ENCODE measurements at regions of chr2 and their contacts with region 1.

Region 1: DNA sequence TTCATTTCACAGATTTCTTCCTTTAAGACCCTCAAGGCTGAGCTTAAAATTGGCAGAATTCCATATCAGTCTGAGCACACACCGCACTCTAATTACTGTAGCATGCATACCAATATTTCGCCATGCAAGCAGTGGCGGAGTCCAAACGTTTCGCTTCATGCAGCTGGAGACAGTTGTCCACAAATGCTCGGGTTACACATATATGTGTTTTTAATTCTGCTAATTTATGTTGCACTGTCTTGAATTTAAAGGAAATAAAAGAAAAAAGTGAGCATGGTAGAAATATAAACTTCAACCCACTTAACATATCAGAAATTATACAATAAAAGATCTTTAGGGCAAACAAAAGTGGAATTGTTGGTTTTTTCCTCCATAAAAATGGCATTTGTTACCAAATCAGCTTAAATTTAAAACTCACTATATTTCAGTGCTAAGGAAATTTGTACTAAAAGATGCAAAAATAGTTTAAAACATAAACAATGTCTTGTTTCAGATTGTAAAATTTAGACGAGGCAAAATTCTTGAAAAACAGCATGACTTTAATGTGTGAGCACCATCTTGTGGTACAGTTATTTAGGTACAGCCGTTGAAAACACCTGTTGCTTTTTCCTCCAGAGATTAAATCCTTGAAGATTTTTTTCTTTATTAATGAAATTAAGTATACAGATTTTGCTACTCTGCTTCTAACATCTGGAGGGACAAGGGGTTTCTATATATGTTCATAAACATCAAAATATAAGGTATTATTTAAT is 24.1 kb upstream of the KANSL1L start:
- DNase-seq: peak in 3 of 14 experiments; percentile 50 to 71 (median 71)
- ATAC-seq: peak; percentile 43
- H3K4me3 ChIP-seq: no peak overlapping the region
- H3K4me3 Mint-ChIP-seq: peak overlapping the region; percentile 69
- H3K27ac ChIP-seq: no peak overlapping the region
- H3K27ac Mint-ChIP-seq: no peak overlapping the region
- H3K4me1 ChIP-seq: no peaks in the 10 kb centered on the region
- H3K4me1 Mint-ChIP-seq: no peaks in the 10 kb centered on the region
- H3K27me3 ChIP-seq: no peaks in the 10 kb centered on the region
- H3K27me3 Mint-ChIP-seq: no peaks in the 10 kb centered on the region
- CTCF ChIP-seq: peak; percentile 81

Region 2: DNA sequence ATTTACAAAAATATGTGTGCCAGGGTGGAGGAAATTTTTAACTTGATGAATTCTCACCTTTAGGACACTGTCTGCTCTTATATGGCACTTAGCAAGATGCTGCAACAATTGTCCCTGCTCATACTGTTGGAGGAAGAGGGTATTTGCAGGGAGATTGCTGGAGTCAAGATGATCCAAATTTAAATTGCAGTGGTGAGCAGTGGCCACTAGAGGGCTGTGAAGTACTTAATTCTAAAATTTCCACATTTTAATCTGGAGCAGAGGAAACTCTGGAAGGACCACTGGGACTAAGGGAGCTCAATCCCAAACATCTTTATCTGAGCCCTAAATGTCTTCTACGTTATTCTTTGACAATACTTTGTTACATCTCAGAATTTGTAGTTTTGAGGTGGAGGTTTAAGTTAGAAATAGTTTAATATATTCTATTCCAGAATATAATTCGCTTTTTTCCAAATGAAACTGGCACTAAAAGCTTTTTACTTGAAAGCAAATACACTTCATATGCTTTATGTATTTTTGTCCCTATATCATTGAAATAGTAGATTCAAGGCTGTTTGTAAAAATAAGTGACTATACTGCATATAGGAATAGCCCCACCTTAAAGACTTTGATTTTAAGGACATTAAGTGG is 1821.7 kb before region 1 on chr2:
- CTCF ChIA-PET with region 1: no interaction called
- POLR2A ChIA-PET with region 1: no interaction called
- intact Hi-C with region 1: loop called (anchors 5 to 10 kb)
- DNase-seq: peak in 5 of 14 experiments; percentile 20 to 47 (median 26)
- ATAC-seq: peak; percentile 48
- H3K4me3 ChIP-seq: no peak overlapping the region
- H3K4me3 Mint-ChIP-seq: no peak overlapping the region
- H3K27ac ChIP-seq: no peak overlapping the region
- H3K27ac Mint-ChIP-seq: no peak overlapping the region
- H3K4me1 ChIP-seq: no peaks in the 10 kb centered on the region
- H3K4me1 Mint-ChIP-seq: no peaks in the 10 kb centered on the region
- H3K27me3 ChIP-seq: no peaks in the 10 kb centered on the region
- H3K27me3 Mint-ChIP-seq: peaks cover 17% of the 10 kb centered on the region
- CTCF ChIP-seq: peak; percentile 95

Region 3: DNA sequence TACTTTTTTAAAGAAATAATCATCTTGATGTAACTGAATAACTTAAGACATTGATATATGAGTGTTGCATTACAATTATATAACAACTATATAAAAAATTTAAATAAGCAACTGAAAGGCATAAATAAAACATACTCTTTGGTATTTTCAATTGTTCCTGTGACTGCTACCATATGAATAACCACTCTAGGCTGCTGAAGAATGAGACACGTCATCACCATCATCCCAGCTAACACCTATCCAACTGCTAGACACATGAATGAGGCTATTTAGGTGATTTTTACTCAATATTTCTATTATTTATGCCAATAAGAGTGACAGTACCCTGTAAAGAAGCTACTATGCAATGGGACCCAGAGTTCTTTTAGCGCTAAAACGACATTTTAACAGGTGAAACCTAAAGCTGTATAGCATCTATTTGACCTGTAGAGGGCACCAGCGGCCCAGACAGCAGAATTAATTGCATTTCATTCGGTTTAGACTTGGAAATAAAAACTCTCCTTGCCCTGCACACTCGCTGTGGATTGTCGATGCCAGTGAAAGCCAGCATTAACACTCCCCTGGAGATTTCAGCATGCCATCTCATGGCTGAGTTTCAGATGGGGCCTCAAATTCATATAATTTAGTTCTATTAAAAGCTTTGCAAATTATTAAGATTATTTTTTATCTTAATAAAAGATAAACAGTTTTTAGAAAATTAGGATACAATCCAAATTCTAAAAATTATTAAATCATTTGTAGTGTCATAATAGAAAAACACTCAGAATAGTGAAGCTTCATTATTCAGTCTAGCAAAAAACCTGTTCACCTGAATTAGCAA is 860.9 kb before region 1 on chr2:
- CTCF ChIA-PET with region 1: no interaction called
- POLR2A ChIA-PET with region 1: no interaction called
- intact Hi-C with region 1: loop called in 1 of 2 experiments (anchors 10 kb)
- DNase-seq: peak in 3 of 14 experiments; percentile 4 to 34 (median 26)
- ATAC-seq: no peak
- H3K4me3 ChIP-seq: no peak overlapping the region
- H3K4me3 Mint-ChIP-seq: no peak overlapping the region
- H3K27ac ChIP-seq: no peak overlapping the region
- H3K27ac Mint-ChIP-seq: no peak overlapping the region
- H3K4me1 ChIP-seq: no peaks in the 10 kb centered on the region
- H3K4me1 Mint-ChIP-seq: no peaks in the 10 kb centered on the region
- H3K27me3 ChIP-seq: no peaks in the 10 kb centered on the region
- H3K27me3 Mint-ChIP-seq: no peaks in the 10 kb centered on the region
- CTCF ChIP-seq: peak; percentile 60

Region 4: DNA sequence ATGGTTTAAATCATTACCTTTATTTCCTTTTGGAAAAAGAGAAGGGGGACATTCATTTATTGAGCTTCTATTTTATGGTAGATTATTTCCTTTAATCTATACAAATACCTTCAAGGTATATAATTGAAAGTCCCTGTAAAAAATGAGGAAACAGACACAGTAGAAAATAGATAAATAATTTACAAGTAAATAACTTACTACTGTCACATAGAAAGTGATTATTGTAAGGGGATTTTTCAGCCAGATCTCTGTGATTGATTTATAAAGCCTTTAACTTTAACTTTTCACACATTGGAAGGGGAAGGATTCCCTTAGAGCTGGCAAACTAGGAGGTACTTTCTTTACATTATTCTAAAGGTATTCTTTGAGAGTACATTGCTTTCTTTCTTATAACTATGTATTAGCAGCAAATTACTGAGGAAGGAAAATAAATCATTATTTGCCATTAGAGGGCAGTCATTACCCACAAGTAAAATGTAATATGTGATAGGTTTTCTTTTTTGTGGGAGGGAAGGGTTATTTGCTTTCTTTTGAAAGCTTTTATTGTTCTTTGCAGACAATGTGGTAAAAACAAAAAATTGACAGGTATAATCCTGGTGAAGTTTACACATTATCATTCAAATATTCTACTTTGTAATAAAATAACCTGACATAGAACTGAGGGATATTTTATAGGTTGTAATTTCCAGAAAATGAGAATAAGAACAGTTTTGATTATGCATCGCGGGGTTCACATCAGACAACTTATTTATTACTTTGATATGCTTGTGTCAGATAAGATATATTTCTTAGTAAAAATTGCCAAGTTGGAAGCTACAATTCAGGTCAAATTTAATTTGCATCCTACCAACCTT is 217.7 kb before region 1 on chr2:
- CTCF ChIA-PET with region 1: interaction called, 7 read pairs
- POLR2A ChIA-PET with region 1: no interaction called
- intact Hi-C with region 1: loop called (anchors 1 kb)
- DNase-seq: peak in 3 of 14 experiments; percentile 59 to 70 (median 63)
- ATAC-seq: no peak
- H3K4me3 ChIP-seq: no peak overlapping the region
- H3K4me3 Mint-ChIP-seq: no peak overlapping the region
- H3K27ac ChIP-seq: no peak overlapping the region
- H3K27ac Mint-ChIP-seq: no peak overlapping the region
- H3K4me1 ChIP-seq: no peaks in the 10 kb centered on the region
- H3K4me1 Mint-ChIP-seq: no peaks in the 10 kb centered on the region
- H3K27me3 ChIP-seq: no peaks in the 10 kb centered on the region
- H3K27me3 Mint-ChIP-seq: peaks cover 10% of the 10 kb centered on the region
- CTCF ChIP-seq: peak; percentile 73

Region 5: GRCh38 chr2:210072922-210073509 is 122.3 kb before region 1 on chr2:
- CTCF ChIA-PET with region 1: no interaction called
- POLR2A ChIA-PET with region 1: no interaction called
- intact Hi-C with region 1: loop called (anchors 1 to 5 kb)
- DNase-seq: peak in 3 of 14 experiments; percentile 4 to 23 (median 13)
- ATAC-seq: no peak
- H3K4me3 ChIP-seq: no peak overlapping the region
- H3K4me3 Mint-ChIP-seq: no peak overlapping the region
- H3K27ac ChIP-seq: no peak overlapping the region
- H3K27ac Mint-ChIP-seq: no peak overlapping the region
- H3K4me1 ChIP-seq: no peaks in the 10 kb centered on the region
- H3K4me1 Mint-ChIP-seq: no peaks in the 10 kb centered on the region
- H3K27me3 ChIP-seq: no peaks in the 10 kb centered on the region
- H3K27me3 Mint-ChIP-seq: no peaks in the 10 kb centered on the region
- CTCF ChIP-seq: peak; percentile 55